Body of pancreas (tissue), 4 donors: ENCODE measurements at regions of chr7 and their contacts with region 1.

Region 1: DNA sequence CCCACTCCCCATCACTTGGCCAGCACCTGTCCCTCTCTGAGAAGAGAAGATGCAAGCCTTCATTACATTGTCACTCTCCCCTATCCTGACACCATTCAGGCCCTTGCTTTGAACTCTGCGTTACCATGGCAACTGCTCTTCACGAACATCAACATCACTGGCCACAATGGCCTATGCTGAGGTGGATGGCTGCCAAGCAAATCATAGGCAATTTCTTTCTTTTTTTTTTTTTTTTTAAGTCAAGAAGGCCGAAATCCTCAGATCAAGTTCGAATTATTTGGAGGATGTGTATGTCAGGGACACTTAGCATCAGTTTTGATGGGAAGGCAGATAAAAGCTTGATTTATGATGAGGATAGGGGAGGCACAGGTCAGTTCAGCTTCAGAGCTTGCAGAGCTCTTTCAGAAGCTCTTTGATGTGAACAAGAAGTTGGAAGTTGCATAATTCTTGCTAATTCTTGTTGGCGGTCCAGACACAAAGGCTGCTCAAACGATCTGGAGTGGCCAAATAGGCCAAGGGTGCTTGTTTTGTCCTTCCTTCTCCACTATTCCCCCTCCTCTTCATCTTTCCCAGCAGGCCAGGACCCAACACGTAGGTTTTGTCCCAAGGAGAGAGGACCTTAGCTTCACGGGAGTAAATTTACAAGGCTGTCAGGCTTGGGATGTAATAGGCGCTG is 179.9 kb upstream of the NPVF start:
- DNase-seq: no peak
- ATAC-seq: no peak
- H3K4me3 ChIP-seq: no peak overlapping the region
- H3K27ac ChIP-seq: no peak overlapping the region
- H3K4me1 ChIP-seq: no peaks in the 10 kb centered on the region
- H3K27me3 ChIP-seq: no peaks in the 10 kb centered on the region
- CTCF ChIP-seq: no peak
- POLR2A ChIP-seq: no peak

Region 2: GRCh38 chr7:25557379-25557917 is 149.3 kb after region 1 on chr7:
- intact Hi-C with region 1: loop called (anchors 10 kb)
- DNase-seq: no peak
- ATAC-seq: no peak
- H3K4me3 ChIP-seq: no peak overlapping the region
- H3K27ac ChIP-seq: no peak overlapping the region
- H3K4me1 ChIP-seq: no peaks in the 10 kb centered on the region
- H3K27me3 ChIP-seq: no peaks in the 10 kb centered on the region
- CTCF ChIP-seq: no peak
- POLR2A ChIP-seq: no peak